ENCODE measurements at regions of chr7 and their contacts with region 1.

Region 1: GRCh38 chr7:87416682-87417587 is 58.5 kb downstream of the ABCB4 start:
- DNase-seq: no peak
- H3K4me3 ChIP-seq: no peak overlapping the region
- H3K27ac ChIP-seq: no peak overlapping the region
- H3K4me1 ChIP-seq: peaks cover 0 to 6% (median 0%) of the 10 kb centered on the region in 6 donors
- H3K27me3 ChIP-seq: no peaks in the 10 kb centered on the region
- CTCF ChIP-seq: peak; percentile 27 to 77 (median 67)
- POLR2A ChIP-seq: no peak

Region 2: GRCh38 chr7:87219545-87220025 is 197.3 kb before region 1 on chr7 and contains the start of gene TMEM243:
- intact Hi-C with region 1: no loop called
- DNase-seq: peak; percentile 98
- H3K4me3 ChIP-seq: peak within 1 kb of the TSS; percentile 67 to 98 (median 94)
- H3K27ac ChIP-seq: peak within 1 kb of the TSS; percentile 80 to 98 (median 92)
- H3K4me1 ChIP-seq: peaks cover 6 to 59% (median 53%) of the 10 kb centered on the region in 6 donors
- H3K27me3 ChIP-seq: peaks cover 0 to 25% (median 0%) of the 10 kb centered on the region in 7 donors
- CTCF ChIP-seq: peak in 10 of 11 experiments; percentile 16 to 63 (median 41)
- POLR2A ChIP-seq: peak; percentile 37 to 90 (median 84)
- total RNA-seq, gene TMEM243: 45.4 to 144 (median 57.2) TPM

Region 3: DNA sequence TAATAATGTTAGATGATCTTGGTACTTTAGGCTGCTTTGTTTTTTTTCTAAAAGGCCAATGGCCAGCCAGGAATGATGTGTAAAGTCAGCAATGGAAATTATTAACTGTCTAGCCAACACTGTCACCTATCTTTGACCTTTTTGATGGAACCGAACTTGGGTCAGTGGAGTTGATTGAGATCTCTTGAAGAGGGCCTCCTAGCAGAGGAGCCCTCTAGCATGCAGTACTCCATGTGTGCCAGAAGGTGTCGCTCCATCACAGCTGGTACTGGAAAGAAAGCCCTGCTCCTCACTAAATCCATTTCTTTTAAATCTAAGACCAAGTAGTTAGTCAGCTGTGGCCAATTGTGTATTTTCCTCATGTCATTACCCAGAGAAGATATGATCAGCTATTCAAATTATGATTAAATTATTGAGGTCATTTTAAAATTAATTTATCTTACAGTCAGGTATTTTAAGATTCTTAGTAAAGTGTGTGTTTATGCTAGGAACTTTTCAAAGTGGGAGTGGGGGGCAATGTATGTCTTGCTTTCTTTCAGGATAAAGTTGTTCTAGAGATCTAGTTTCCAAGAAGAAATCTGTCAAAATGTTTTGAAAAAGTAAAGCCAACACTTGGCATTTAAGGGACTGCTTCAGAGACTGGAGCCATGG is 104.6 kb before region 1 on chr7:
- intact Hi-C with region 1: loop called (anchors 2 kb)
- DNase-seq: no peak
- H3K4me3 ChIP-seq: no peak overlapping the region
- H3K27ac ChIP-seq: no peak overlapping the region
- H3K4me1 ChIP-seq: peaks cover 0 to 7% (median 2%) of the 10 kb centered on the region in 6 donors
- H3K27me3 ChIP-seq: no peaks in the 10 kb centered on the region
- CTCF ChIP-seq: peak; percentile 84 to 99 (median 97)
- POLR2A ChIP-seq: no peak